B cell (primary cell): ENCODE measurements at regions of chr19 and their contacts with region 1.

Region 1: GRCh38 chr19:18281082-18282020 is at the start of gene JUND:
- DNase-seq: peak; percentile 100
- ATAC-seq: peak; percentile 63
- H3K4me3 ChIP-seq: peak within 1 kb of the TSS; percentile 77 to 98 (median 94)
- H3K4me3 Mint-ChIP-seq: peak within 1 kb of the TSS; percentile 97
- H3K27ac ChIP-seq: peak within 1 kb of the TSS; percentile 99 to 100
- H3K27ac Mint-ChIP-seq: peak within 1 kb of the TSS; percentile 98
- H3K4me1 ChIP-seq: peaks cover 23 to 43% of the 10 kb centered on the region in 2 donors
- H3K4me1 Mint-ChIP-seq: peaks cover 51% of the 10 kb centered on the region
- H3K27me3 ChIP-seq: no peaks in the 10 kb centered on the region
- H3K27me3 Mint-ChIP-seq: no peaks in the 10 kb centered on the region
- CTCF ChIP-seq: no peak
- total RNA-seq, gene JUND: 608 and 628 TPM in 2 replicates

Region 2: DNA sequence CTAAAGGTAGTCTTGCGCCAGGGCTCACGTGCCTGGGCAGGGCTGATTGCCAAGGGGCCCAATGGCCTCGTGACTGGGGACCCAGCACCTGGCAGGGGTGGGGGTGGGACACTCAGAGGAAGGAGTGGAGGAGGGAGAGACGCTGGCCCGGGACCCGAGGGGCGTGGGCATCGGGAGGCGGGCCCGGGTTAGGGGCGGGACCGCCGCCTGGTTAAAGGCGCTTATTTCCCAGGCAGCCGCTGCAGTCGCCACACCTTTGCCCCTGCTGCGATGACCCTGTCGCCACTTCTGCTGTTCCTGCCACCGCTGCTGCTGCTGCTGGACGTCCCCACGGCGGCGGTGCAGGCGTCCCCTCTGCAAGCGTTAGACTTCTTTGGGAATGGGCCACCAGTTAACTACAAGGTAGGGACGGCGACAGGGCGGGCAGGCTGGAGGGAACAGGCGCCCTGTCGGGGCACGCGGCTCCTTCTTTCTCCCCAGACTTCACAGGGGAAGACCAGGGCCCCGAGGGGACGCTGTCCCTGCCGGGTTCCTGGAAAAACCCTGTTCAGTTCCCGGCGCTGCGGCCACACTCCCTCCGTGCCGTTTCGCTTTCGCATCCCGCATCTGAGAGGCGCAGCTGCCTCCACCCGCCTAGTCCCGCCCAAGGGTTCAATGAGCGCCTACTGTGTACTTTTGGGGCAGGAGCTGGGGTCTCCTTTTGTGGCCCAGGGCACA is 107.6 kb before region 1 on chr19 and contains the start of gene IFI30:
- CTCF ChIA-PET with region 1: interaction called, 5 read pairs
- POLR2A ChIA-PET with region 1: interaction called, 18 read pairs
- intact Hi-C with region 1: no loop called
- DNase-seq: peak; percentile 97
- ATAC-seq: peak; percentile 65
- H3K4me3 ChIP-seq: peak within 1 kb of the TSS; percentile 67 to 97 (median 83)
- H3K4me3 Mint-ChIP-seq: peak within 1 kb of the TSS; percentile 94
- H3K27ac ChIP-seq: peak within 1 kb of the TSS; percentile 97 to 99
- H3K27ac Mint-ChIP-seq: peak within 1 kb of the TSS; percentile 98
- H3K4me1 ChIP-seq: peaks cover 72 to 90% of the 10 kb centered on the region in 2 donors
- H3K4me1 Mint-ChIP-seq: peaks cover 84% of the 10 kb centered on the region
- H3K27me3 ChIP-seq: no peaks in the 10 kb centered on the region
- H3K27me3 Mint-ChIP-seq: no peaks in the 10 kb centered on the region
- CTCF ChIP-seq: no peak
- total RNA-seq, gene IFI30: 171 TPM in 2 replicates

Region 3: DNA sequence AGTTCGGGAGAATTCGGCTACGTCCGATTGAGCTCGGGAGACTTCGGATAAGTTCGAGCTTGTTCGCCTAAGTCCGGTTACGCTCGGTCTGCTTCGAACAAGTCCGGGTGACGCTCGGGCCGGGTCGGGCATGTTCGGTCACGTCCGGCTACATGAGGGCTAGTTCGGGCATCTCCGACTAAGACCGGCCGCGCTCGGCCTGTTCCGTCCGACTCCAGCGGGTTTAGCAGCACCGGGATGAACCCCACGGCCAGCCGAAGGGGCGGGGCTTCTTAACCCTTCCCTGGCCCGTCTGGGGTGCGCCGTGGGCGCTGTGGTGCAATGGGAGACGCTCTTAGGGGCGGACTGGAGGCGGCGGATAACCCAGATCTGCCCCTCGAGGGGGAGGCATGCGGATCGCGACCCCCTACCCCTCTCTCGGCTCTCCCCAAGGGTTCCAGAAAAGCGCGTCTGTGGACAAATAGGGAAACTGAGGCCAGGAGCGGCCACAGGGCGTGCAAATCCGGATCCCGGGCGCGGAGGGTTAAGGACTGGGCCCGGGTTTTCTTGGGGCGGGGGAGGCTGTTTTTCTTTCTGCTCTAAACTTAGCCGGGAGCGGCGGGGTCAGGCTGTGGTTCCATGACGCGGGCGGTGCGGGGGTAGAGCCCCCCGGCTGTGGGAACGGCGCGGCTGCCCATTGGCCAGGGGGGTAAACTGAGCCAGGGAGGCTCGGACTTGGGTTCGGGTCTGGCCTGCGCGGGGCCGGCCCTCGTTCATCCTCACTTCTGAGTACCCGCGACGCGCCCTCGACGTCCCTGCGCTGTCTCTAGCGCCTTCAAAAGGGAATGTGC is 56.6 kb before region 1 on chr19:
- CTCF ChIA-PET with region 1: interaction called, 10 read pairs
- POLR2A ChIA-PET with region 1: interaction called, 3 read pairs
- intact Hi-C with region 1: no loop called
- DNase-seq: peak; percentile 93
- ATAC-seq: peak; percentile 99
- H3K4me3 ChIP-seq: peak overlapping the region; percentile 21 to 68 (median 46)
- H3K4me3 Mint-ChIP-seq: peak overlapping the region; percentile 91
- H3K27ac ChIP-seq: no peak overlapping the region
- H3K27ac Mint-ChIP-seq: peak overlapping the region; percentile 71
- H3K4me1 ChIP-seq: peaks cover 29 to 36% of the 10 kb centered on the region in 2 donors
- H3K4me1 Mint-ChIP-seq: peaks cover 36% of the 10 kb centered on the region
- H3K27me3 ChIP-seq: peaks cover 0 to 85% (median 41%) of the 10 kb centered on the region in 4 experiments
- H3K27me3 Mint-ChIP-seq: peaks cover 53% of the 10 kb centered on the region
- CTCF ChIP-seq: no peak

Region 4: GRCh38 chr19:18304458-18305310 is 23.3 kb after region 1 on chr19:
- CTCF ChIA-PET with region 1: interaction called, 167 read pairs
- POLR2A ChIA-PET with region 1: interaction called, 224 read pairs
- intact Hi-C with region 1: loop called (anchors 1 kb)
- DNase-seq: peak; percentile 89
- ATAC-seq: peak; percentile 64
- H3K4me3 ChIP-seq: peak overlapping the region in 4 of 5 experiments; percentile 51 to 60 (median 54)
- H3K4me3 Mint-ChIP-seq: peak overlapping the region; percentile 95
- H3K27ac ChIP-seq: peak overlapping the region; percentile 98 to 99
- H3K27ac Mint-ChIP-seq: peak overlapping the region; percentile 100
- H3K4me1 ChIP-seq: peaks cover 44 to 68% of the 10 kb centered on the region in 2 donors
- H3K4me1 Mint-ChIP-seq: peaks cover 44% of the 10 kb centered on the region
- H3K27me3 ChIP-seq: no peaks in the 10 kb centered on the region
- H3K27me3 Mint-ChIP-seq: no peaks in the 10 kb centered on the region
- CTCF ChIP-seq: no peak

Region 5: DNA sequence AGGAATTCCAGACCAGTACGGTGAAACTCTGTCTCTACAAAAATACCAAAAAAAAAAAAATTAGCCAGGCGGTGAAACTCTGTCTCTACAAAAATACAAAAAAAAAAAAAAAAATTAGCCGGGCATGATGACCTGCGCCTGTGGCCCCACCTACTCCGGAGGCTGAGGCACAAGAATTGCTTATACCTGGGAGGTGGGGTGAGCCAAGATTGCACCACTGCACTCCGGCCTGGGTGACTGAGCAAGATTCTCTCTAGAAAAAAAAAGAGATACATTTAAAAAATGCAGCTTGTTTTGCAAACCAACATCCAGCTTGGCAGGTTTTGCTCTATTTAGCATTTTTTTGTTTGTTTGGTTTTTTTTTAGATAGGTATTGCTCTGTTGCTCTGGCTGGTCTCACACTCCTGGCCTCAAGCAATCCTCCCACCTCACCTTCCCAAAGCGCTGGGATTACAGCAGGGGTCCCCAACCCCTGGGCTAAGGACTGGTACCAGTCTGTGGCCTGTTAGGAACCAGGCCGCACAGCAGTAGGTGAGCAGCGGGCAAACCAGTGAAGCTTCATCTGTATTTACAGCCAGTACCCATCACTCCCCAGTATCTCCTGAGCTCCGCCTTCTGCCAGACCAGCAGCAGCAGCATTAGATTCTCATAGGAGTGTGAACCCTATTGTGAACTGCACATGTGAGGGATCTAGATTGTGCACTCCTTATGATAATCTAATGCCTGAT is 52.5 kb after region 1 on chr19:
- CTCF ChIA-PET with region 1: interaction called, 259 read pairs
- POLR2A ChIA-PET with region 1: interaction called, 69 read pairs
- intact Hi-C with region 1: no loop called
- DNase-seq: no peak
- ATAC-seq: no peak
- H3K4me3 ChIP-seq: no peak overlapping the region
- H3K4me3 Mint-ChIP-seq: no peak overlapping the region
- H3K27ac ChIP-seq: no peak overlapping the region
- H3K27ac Mint-ChIP-seq: no peak overlapping the region
- H3K4me1 ChIP-seq: peaks cover 2 to 3% of the 10 kb centered on the region in 2 donors
- H3K4me1 Mint-ChIP-seq: peaks cover 4% of the 10 kb centered on the region
- H3K27me3 ChIP-seq: peaks cover 0 to 7% (median 0%) of the 10 kb centered on the region in 4 experiments
- H3K27me3 Mint-ChIP-seq: peaks cover 3% of the 10 kb centered on the region
- CTCF ChIP-seq: no peak

Region 6: DNA sequence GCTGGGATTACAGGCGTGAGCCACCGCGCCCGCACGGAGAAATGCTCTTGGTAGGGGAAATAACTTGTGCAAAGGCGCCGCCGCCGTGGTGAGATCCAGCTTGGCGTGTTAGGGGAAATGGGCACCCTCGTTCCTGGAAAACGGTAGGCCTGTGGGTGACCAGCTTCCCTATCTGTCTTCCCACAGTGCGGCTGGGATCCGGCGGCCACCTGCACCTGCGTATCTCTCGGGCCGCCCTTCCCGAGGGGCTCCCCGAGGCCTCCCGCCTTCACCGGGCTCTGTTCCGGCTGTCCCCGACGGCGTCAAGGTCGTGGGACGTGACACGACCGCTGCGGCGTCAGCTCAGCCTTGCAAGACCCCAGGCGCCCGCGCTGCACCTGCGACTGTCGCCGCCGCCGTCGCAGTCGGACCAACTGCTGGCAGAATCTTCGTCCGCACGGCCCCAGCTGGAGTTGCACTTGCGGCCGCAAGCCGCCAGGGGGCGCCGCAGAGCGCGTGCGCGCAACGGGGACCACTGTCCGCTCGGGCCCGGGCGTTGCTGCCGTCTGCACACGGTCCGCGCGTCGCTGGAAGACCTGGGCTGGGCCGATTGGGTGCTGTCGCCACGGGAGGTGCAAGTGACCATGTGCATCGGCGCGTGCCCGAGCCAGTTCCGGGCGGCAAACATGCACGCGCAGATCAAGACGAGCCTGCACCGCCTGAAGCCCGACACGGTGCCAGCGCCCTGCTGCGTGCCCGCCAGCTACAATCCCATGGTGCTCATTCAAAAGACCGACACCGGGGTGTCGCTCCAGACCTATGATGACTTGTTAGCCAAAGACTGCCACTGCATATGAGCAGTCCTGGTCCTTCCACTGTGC is 107.0 kb after region 1 on chr19:
- CTCF ChIA-PET with region 1: interaction called, 34 read pairs
- POLR2A ChIA-PET with region 1: no interaction called
- intact Hi-C with region 1: loop called (anchors 1 kb)
- DNase-seq: peak; percentile 93
- ATAC-seq: peak; percentile 85
- H3K4me3 ChIP-seq: peak overlapping the region in 4 of 5 experiments; percentile 26 to 51 (median 40)
- H3K4me3 Mint-ChIP-seq: peak overlapping the region; percentile 82
- H3K27ac ChIP-seq: no peak overlapping the region
- H3K27ac Mint-ChIP-seq: peak overlapping the region; percentile 70
- H3K4me1 ChIP-seq: peaks cover 34 to 36% of the 10 kb centered on the region in 2 donors
- H3K4me1 Mint-ChIP-seq: peaks cover 34% of the 10 kb centered on the region
- H3K27me3 ChIP-seq: peaks cover 0 to 38% (median 17%) of the 10 kb centered on the region in 4 experiments
- H3K27me3 Mint-ChIP-seq: peaks cover 5% of the 10 kb centered on the region
- CTCF ChIP-seq: peak; percentile 99

Region 7: DNA sequence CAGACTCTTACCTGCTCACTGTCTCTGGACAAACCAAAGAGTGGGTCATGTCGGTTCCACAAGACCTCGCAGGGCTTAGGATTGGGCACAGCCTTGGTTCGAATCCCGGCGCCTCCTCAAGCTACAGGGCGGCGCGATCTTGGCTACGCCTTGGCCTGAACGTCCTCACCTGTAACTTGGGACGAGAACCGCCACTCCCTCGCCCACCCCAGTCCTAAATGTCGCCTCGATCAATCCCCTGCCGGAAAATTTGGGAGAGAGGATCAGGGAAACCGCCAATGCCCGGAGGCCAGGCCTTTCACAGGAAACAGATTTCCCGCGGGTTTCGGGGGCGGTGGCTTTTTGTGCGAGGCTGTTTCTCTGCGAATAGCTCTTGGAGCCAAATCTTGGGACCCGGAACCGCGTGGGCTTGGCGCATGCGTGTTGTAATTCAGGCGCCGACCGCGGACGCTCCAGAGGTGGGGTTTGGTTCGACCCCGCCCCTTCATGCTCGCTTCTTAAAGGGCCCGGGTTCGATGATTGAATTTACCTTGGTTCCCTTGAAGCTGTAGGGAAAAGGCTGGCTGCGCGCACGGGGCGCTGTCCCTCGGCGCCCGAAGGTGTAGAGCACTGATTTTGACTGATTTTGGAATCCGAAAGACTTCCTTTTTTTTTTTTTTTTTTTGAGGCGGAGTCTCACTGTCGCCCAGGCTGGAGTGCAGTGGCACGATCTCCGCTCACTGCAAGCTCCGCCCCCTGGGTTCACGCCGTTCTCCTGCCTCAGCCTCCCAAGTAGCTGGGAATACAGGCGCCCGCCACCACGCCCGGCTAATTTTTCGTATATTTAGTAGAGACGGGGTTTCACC is 921.9 kb after region 1 on chr19 and contains the start of gene NR2C2AP:
- CTCF ChIA-PET with region 1: no interaction called
- POLR2A ChIA-PET with region 1: interaction called, 14 read pairs
- intact Hi-C with region 1: no loop called
- DNase-seq: peak; percentile 93
- ATAC-seq: peak; percentile 94
- H3K4me3 ChIP-seq: peak within 1 kb of the TSS; percentile 71 to 91 (median 81)
- H3K4me3 Mint-ChIP-seq: peak within 1 kb of the TSS; percentile 92
- H3K27ac ChIP-seq: peak within 1 kb of the TSS; percentile 57 to 85
- H3K27ac Mint-ChIP-seq: peak within 1 kb of the TSS; percentile 91
- H3K4me1 ChIP-seq: peaks cover 23 to 33% of the 10 kb centered on the region in 2 donors
- H3K4me1 Mint-ChIP-seq: peaks cover 30% of the 10 kb centered on the region
- H3K27me3 ChIP-seq: peaks cover 0 to 11% (median 2%) of the 10 kb centered on the region in 4 experiments
- H3K27me3 Mint-ChIP-seq: peaks cover 9% of the 10 kb centered on the region
- CTCF ChIP-seq: no peak
- total RNA-seq, gene NR2C2AP: 27.1 and 29.3 TPM in 2 replicates